Activated CD4-positive, alpha-beta memory T cell treated with anti-CD3 and anti-CD28 coated beads for 36 hours (primary cell): ENCODE measurements at regions of chr9 and their contacts with region 1.

Region 1: DNA sequence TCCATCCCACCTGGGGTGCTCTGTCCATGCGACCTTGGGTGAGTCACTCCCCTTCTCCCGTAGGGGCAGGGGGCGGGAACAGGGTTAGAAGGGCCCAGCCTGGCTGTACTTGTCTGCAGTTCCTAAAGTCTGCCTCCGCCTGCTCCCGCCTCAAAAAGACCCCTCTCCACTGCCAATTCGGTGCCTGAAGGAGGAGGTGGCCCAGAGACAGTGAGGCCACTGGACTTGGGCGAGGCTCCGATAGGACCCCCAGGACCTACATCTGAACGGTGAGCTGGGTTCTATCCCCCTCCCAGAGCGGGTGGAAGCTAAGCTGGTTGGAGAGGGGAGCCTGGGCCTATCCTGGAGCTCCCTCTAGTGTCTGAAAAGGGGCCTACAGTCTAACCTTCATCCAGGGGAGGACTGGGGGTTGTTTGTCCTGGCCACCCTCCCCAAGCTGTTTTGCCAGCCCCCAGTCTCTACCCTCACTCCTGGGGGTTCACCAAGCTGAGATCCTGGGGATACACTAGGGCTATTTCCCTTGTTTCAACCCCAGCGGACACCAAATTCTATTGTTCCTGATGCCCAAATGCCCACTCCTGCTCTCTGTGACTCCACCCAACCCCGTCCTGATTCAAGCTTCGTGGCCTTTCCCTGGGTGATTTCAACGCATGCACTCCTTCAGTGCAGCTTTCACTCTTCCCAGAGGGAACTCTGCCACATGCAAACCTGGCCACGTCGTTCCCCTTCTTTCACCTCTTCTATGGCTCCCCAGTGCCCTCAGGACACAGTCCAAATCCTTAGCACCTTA is 6.1 kb upstream of the CRB2 start:
- DNase-seq: peak; percentile 72
- H3K4me3 Mint-ChIP-seq: no peak overlapping the region
- H3K27ac Mint-ChIP-seq: no peak overlapping the region
- H3K4me1 Mint-ChIP-seq: no peaks in the 10 kb centered on the region
- H3K27me3 Mint-ChIP-seq: peaks cover 16% of the 10 kb centered on the region

Region 2: DNA sequence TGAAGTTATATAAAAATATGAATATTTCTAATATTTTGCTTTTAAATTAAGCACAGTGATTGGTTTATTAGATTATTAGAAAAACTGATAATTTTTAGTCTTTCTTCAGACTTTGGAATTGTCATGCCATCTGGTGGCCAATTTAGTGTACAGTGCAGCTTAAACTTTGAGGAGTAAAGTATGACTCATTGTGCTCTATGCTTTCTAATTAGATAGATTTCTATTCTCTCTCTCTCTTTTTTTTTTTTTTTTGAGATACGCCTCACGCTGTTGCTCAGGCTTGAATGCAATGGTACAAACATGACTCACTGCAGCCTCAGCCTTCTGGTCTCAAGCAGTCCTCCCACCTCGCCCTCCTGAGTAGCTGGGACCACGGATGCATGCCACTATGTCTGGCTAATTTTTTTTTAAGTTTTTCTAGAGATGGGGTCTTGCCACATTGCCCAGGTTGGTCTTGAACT is 358.5 kb before region 1 on chr9:
- CTCF ChIA-PET with region 1: interaction called, 4 read pairs
- POLR2A ChIA-PET with region 1: no interaction called
- intact Hi-C with region 1: loop called (anchors 5 kb)
- DNase-seq: peak; percentile 62
- H3K4me3 Mint-ChIP-seq: no peak overlapping the region
- H3K27ac Mint-ChIP-seq: no peak overlapping the region
- H3K4me1 Mint-ChIP-seq: peaks cover 8% of the 10 kb centered on the region
- H3K27me3 Mint-ChIP-seq: no peaks in the 10 kb centered on the region

Region 3: DNA sequence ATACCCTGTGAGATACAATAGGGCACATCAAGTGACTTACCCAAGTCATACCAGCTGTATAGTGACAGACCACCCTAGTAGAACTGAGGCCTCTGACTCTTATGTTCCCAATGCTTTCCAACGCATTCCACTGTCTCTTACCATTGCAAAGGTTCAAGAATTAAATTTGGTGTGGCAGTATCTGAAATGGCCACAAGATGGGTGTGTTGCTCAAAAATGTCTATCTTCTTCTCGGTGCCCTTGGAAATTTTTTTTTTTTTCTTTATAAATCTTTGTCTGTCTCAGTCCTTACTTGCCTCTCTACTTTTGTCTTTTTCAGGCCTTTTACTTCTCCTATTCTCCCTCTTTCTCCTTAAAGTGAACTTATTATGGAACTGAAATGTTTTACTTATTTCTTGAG is 268.1 kb before region 1 on chr9:
- CTCF ChIA-PET with region 1: interaction called, 73 read pairs
- POLR2A ChIA-PET with region 1: no interaction called
- intact Hi-C with region 1: loop called (anchors 2 kb)
- DNase-seq: no peak
- H3K4me3 Mint-ChIP-seq: no peak overlapping the region
- H3K27ac Mint-ChIP-seq: no peak overlapping the region
- H3K4me1 Mint-ChIP-seq: no peaks in the 10 kb centered on the region
- H3K27me3 Mint-ChIP-seq: no peaks in the 10 kb centered on the region

Region 4: DNA sequence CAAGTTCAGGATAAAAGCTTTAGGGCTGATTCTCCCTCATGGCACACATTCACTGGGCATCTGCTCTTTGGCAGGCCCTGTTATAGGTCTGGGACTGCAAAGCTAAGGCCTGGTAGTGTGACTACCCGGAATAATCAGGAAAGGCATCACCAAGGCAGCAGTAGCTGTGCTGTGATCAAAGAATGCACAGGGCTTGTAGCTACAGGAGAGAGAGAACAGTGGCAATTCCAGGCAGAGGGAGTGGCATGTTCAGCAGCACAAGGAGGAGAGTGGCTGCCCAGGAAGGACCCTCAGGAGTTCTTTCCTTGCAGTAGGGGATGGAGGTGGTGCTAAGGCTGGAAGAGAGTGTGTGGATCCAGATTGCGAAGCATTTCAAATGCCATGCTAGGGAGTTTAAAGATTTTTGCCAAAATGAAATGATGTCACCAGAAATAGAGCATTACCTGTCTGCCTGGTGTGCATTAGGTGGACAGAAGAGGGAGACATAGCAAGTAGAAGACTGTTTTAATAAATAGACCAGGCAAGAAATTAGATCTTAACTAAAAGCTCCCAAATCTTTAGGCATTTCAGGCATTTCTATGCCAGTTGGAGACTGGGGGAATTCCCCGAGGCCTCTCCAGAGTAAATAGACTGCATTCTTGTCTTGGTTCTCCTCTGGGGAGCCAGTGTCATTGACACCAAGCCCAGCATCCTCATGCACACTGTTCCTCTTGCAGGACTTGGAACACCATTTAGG is 247.3 kb before region 1 on chr9:
- CTCF ChIA-PET with region 1: interaction called, 29 read pairs
- POLR2A ChIA-PET with region 1: no interaction called
- intact Hi-C with region 1: no loop called
- DNase-seq: no peak
- H3K4me3 Mint-ChIP-seq: no peak overlapping the region
- H3K27ac Mint-ChIP-seq: no peak overlapping the region
- H3K4me1 Mint-ChIP-seq: no peaks in the 10 kb centered on the region
- H3K27me3 Mint-ChIP-seq: no peaks in the 10 kb centered on the region

Region 5: GRCh38 chr9:123338710-123339665 is 10.9 kb before region 1 on chr9:
- CTCF ChIA-PET with region 1: interaction called, 32 read pairs
- POLR2A ChIA-PET with region 1: no interaction called
- intact Hi-C with region 1: no loop called
- DNase-seq: peak; percentile 88
- H3K4me3 Mint-ChIP-seq: peak overlapping the region; percentile 80
- H3K27ac Mint-ChIP-seq: peak overlapping the region; percentile 95
- H3K4me1 Mint-ChIP-seq: peaks cover 34% of the 10 kb centered on the region
- H3K27me3 Mint-ChIP-seq: no peaks in the 10 kb centered on the region

Region 6: GRCh38 chr9:123548741-123549545 is 199.1 kb after region 1 on chr9:
- CTCF ChIA-PET with region 1: no interaction called
- POLR2A ChIA-PET with region 1: no interaction called
- intact Hi-C with region 1: no loop called
- DNase-seq: peak; percentile 80
- H3K4me3 Mint-ChIP-seq: no peak overlapping the region
- H3K27ac Mint-ChIP-seq: peak overlapping the region; percentile 53
- H3K4me1 Mint-ChIP-seq: peaks cover 24% of the 10 kb centered on the region
- H3K27me3 Mint-ChIP-seq: no peaks in the 10 kb centered on the region